ENCODE measurements at regions of chr20 and their contacts with region 1.

Region 1: GRCh38 chr20:22684072-22684762 is 99.8 kb upstream of the FOXA2 start:
- DNase-seq: peak; percentile 70 to 81
- ATAC-seq: peak; percentile 85
- H3K4me3 ChIP-seq: no peak overlapping the region
- H3K27ac ChIP-seq: no peak overlapping the region
- H3K4me1 ChIP-seq: no peaks in the 10 kb centered on the region
- H3K27me3 ChIP-seq: no peaks in the 10 kb centered on the region

Region 2: DNA sequence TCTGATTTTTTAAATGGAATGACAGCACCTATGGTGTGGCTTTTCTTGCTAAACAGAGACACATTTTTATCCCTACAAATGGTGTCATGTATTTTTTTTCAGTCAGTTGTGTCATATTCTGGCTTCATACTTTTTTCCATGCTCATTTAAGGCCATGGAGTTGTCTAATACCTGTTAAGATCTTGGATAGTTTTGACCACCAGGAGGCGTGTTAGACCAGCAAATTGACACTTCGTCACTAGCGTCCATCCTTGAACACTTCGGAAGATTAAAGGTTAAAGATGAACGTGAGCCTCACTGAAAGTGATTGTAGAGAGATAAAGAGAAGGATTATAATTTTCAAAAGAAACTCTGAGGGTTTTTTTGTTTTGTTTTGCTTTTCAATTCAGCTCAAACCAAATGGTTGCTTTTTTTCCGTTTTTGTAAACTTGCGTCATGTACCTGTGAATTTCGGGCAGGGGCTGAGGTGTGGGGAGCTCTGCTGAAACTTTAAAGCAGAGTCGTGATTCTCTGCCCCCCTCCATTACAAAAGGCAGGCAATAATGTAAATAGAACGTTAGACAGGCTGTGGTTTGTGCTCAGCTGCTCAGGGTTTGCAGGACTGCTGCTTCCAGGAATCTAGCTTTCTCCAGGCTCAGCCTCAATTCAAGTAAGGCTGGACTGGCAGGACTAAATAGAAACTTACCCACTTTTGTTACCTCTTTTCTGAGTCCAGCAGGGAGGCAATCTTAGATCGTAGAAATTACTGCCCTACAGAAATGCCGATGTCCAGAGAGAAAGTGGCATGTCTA is 344.9 kb before region 1 on chr20:
- intact Hi-C with region 1: loop called (anchors 1 to 2 kb)
- DNase-seq: no peak
- ATAC-seq: peak; percentile 77
- H3K4me3 ChIP-seq: no peak overlapping the region
- H3K27ac ChIP-seq: no peak overlapping the region
- H3K4me1 ChIP-seq: no peaks in the 10 kb centered on the region
- H3K27me3 ChIP-seq: no peaks in the 10 kb centered on the region

Region 3: GRCh38 chr20:22512911-22513489 is 171.2 kb before region 1 on chr20:
- intact Hi-C with region 1: no loop called
- DNase-seq: no peak
- ATAC-seq: no peak
- H3K4me3 ChIP-seq: no peak overlapping the region
- H3K27ac ChIP-seq: no peak overlapping the region
- H3K4me1 ChIP-seq: no peaks in the 10 kb centered on the region
- H3K27me3 ChIP-seq: no peaks in the 10 kb centered on the region

Region 4: GRCh38 chr20:22601361-22602141 is 82.7 kb before region 1 on chr20:
- intact Hi-C with region 1: no loop called
- DNase-seq: no peak
- ATAC-seq: no peak
- H3K4me3 ChIP-seq: no peak overlapping the region
- H3K27ac ChIP-seq: no peak overlapping the region
- H3K4me1 ChIP-seq: no peaks in the 10 kb centered on the region
- H3K27me3 ChIP-seq: peaks cover 0 to 2% of the 10 kb centered on the region in 2 donors

Region 5: GRCh38 chr20:22700367-22700766 is 16.1 kb after region 1 on chr20:
- intact Hi-C with region 1: loop called in 1 of 2 experiments (anchors 1 kb)
- DNase-seq: peak in 1 of 2 donors; percentile 68
- ATAC-seq: peak; percentile 58
- H3K4me3 ChIP-seq: no peak overlapping the region
- H3K27ac ChIP-seq: no peak overlapping the region
- H3K4me1 ChIP-seq: no peaks in the 10 kb centered on the region
- H3K27me3 ChIP-seq: no peaks in the 10 kb centered on the region

Region 6: DNA sequence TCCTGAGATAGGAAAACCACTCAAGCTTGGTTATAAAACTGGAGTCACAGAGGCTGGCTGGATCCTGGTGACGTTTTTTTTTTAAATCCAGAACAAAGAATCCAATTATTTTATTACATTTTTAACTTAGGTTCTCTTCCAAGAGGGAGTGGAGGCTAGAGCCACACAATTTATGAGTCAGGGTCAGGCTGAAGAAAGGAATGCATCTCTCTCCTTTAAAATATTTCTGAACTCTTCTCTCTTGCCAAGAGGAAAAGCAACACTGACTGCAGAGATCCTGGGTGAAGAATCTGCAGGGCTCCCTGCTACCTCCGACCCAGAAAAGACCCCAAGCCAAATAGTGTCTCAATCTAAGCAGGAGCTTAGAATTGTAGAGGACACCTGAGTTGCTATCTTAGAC is 262.4 kb after region 1 on chr20:
- intact Hi-C with region 1: no loop called
- DNase-seq: no peak
- ATAC-seq: no peak
- H3K4me3 ChIP-seq: no peak overlapping the region
- H3K27ac ChIP-seq: no peak overlapping the region
- H3K4me1 ChIP-seq: no peaks in the 10 kb centered on the region
- H3K27me3 ChIP-seq: no peaks in the 10 kb centered on the region

Measured in aorta (tissue), 5 donors.